CD4-positive, alpha-beta memory T cell (primary cell): ENCODE measurements at regions of chr2 and their contacts with region 1.

Region 1: GRCh38 chr2:231321556-231322334 is 73.8 kb upstream of the B3GNT7 start:
- DNase-seq: no peak
- H3K4me3 ChIP-seq: no peak overlapping the region
- H3K4me3 Mint-ChIP-seq: no peak overlapping the region
- H3K27ac ChIP-seq: no peak overlapping the region
- H3K27ac Mint-ChIP-seq: no peak overlapping the region
- H3K4me1 ChIP-seq: no peaks in the 10 kb centered on the region
- H3K4me1 Mint-ChIP-seq: peaks cover 0 to 4% (median 0%) of the 10 kb centered on the region in 4 donors
- H3K27me3 ChIP-seq: no peaks in the 10 kb centered on the region
- H3K27me3 Mint-ChIP-seq: peaks cover 17 to 37% of the 10 kb centered on the region in 2 donors

Region 2: GRCh38 chr2:231297108-231297908 is 24.4 kb before region 1 on chr2:
- CTCF ChIA-PET with region 1: no interaction called
- POLR2A ChIA-PET with region 1: no interaction called
- intact Hi-C with region 1: loop called (anchors 1 kb)
- DNase-seq: peak in 3 of 5 donors; percentile 4 to 5 (median 4)
- H3K4me3 ChIP-seq: no peak overlapping the region
- H3K4me3 Mint-ChIP-seq: no peak overlapping the region
- H3K27ac ChIP-seq: no peak overlapping the region
- H3K27ac Mint-ChIP-seq: no peak overlapping the region
- H3K4me1 ChIP-seq: no peaks in the 10 kb centered on the region
- H3K4me1 Mint-ChIP-seq: no peaks in the 10 kb centered on the region
- H3K27me3 ChIP-seq: no peaks in the 10 kb centered on the region
- H3K27me3 Mint-ChIP-seq: peaks cover 3 to 4% of the 10 kb centered on the region in 2 donors

Region 3: GRCh38 chr2:231514103-231514950 is 192.6 kb after region 1 on chr2:
- CTCF ChIA-PET with region 1: no interaction called
- POLR2A ChIA-PET with region 1: no interaction called
- intact Hi-C with region 1: no loop called
- DNase-seq: peak; percentile 98 to 99 (median 99)
- H3K4me3 ChIP-seq: peak overlapping the region; percentile 88 to 90
- H3K4me3 Mint-ChIP-seq: peak overlapping the region; percentile 88 to 91 (median 90)
- H3K27ac ChIP-seq: peak overlapping the region; percentile 87
- H3K27ac Mint-ChIP-seq: peak overlapping the region; percentile 94 to 99 (median 99)
- H3K4me1 ChIP-seq: peaks cover 14% of the 10 kb centered on the region
- H3K4me1 Mint-ChIP-seq: peaks cover 14 to 25% (median 21%) of the 10 kb centered on the region in 4 donors
- H3K27me3 ChIP-seq: no peaks in the 10 kb centered on the region
- H3K27me3 Mint-ChIP-seq: peaks cover 0 to 2% of the 10 kb centered on the region in 2 donors